CD4-positive, alpha-beta memory T cell (primary cell): ENCODE measurements at regions of chr6 and their contacts with region 1.

Region 1: GRCh38 chr6:42294759-42295158 is 77.1 kb upstream of the MRPS10 start:
- DNase-seq: no peak
- H3K4me3 ChIP-seq: no peak overlapping the region
- H3K4me3 Mint-ChIP-seq: peak overlapping the region in 6 of 8 donors; percentile 24 to 78 (median 54)
- H3K27ac ChIP-seq: no peak overlapping the region
- H3K27ac Mint-ChIP-seq: peak overlapping the region; percentile 8 to 90 (median 68)
- H3K4me1 ChIP-seq: peaks cover 60% of the 10 kb centered on the region
- H3K4me1 Mint-ChIP-seq: peaks cover 51 to 74% (median 61%) of the 10 kb centered on the region in 4 donors
- H3K27me3 ChIP-seq: no peaks in the 10 kb centered on the region
- H3K27me3 Mint-ChIP-seq: no peaks in the 10 kb centered on the region

Region 2: GRCh38 chr6:42279144-42279781 is 15.5 kb before region 1 on chr6:
- CTCF ChIA-PET with region 1: interaction called, 4 read pairs
- POLR2A ChIA-PET with region 1: interaction called, 7 read pairs
- intact Hi-C with region 1: loop called (anchors 1 kb)
- DNase-seq: peak in 3 of 5 donors; percentile 14 to 21 (median 18)
- H3K4me3 ChIP-seq: no peak overlapping the region
- H3K4me3 Mint-ChIP-seq: peak overlapping the region in 7 of 8 donors; percentile 40 to 65 (median 55)
- H3K27ac ChIP-seq: peak overlapping the region; percentile 10
- H3K27ac Mint-ChIP-seq: peak overlapping the region; percentile 65 to 91 (median 87)
- H3K4me1 ChIP-seq: peaks cover 46% of the 10 kb centered on the region
- H3K4me1 Mint-ChIP-seq: peaks cover 33 to 58% (median 49%) of the 10 kb centered on the region in 4 donors
- H3K27me3 ChIP-seq: no peaks in the 10 kb centered on the region
- H3K27me3 Mint-ChIP-seq: no peaks in the 10 kb centered on the region

Region 3: DNA sequence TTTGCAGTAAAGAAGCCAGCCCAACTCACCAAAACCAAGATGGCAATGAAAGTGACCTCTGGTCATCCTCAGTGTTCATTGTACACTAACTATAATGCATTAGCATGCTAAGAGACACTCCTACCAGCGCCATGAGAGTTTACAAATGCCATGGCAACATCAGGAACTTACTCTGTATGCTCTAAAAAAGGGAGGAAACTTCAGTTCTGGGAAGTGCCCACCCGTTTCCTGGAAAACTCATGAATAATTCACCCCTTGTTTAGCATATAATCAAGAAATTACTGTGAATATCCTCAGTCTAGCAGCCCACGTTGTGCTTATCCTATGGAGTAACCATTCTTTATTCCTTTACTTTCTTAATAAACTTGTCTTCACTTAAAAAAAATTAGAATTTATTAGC is 176.4 kb after region 1 on chr6:
- CTCF ChIA-PET with region 1: no interaction called
- POLR2A ChIA-PET with region 1: no interaction called
- intact Hi-C with region 1: no loop called
- DNase-seq: no peak
- H3K4me3 ChIP-seq: no peak overlapping the region
- H3K4me3 Mint-ChIP-seq: no peak overlapping the region
- H3K27ac ChIP-seq: no peak overlapping the region
- H3K27ac Mint-ChIP-seq: no peak overlapping the region
- H3K4me1 ChIP-seq: no peaks in the 10 kb centered on the region
- H3K4me1 Mint-ChIP-seq: no peaks in the 10 kb centered on the region
- H3K27me3 ChIP-seq: no peaks in the 10 kb centered on the region
- H3K27me3 Mint-ChIP-seq: no peaks in the 10 kb centered on the region